Heart right ventricle (tissue), 16 donors: ENCODE measurements at regions of chr1 and their contacts with region 1.

Region 1: DNA sequence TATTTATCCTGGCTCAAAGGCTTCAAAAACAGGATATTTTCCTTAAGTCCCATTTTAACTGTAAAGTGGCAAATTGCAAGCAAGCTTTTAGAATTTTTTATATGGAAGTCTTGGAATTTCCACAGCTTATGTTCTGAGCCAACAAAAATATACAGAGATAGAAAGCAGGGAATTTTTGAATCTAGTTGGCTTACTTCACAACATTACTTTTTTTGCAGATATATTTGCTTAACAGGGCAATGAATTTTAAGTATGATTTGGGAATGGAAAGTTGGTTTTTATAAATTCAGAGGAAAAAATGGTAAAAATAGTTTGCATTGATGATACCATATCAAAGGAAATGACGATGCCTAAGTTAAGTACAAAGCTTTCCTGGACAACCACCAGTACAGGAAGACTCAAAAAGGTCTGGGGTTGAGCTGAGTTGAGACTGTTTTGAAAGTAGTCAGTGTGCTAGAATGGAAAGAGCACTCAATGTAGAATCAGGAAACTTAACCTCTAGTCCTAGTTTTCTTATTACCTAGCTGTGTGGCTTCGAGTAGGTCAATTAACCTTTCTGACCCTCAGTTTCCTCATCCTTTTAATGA is 11.0 kb upstream of the VCAM1 start:
- DNase-seq: no peak
- ATAC-seq: peak in 5 of 8 donors; percentile 77 to 90 (median 86)
- H3K4me3 ChIP-seq: no peak overlapping the region
- H3K27ac ChIP-seq: peak overlapping the region in 4 of 10 donors; percentile 16 to 32 (median 18)
- H3K4me1 ChIP-seq: peaks cover 0 to 23% (median 8%) of the 10 kb centered on the region in 9 donors
- H3K27me3 ChIP-seq: no peaks in the 10 kb centered on the region
- CTCF ChIP-seq: no peak

Region 2: DNA sequence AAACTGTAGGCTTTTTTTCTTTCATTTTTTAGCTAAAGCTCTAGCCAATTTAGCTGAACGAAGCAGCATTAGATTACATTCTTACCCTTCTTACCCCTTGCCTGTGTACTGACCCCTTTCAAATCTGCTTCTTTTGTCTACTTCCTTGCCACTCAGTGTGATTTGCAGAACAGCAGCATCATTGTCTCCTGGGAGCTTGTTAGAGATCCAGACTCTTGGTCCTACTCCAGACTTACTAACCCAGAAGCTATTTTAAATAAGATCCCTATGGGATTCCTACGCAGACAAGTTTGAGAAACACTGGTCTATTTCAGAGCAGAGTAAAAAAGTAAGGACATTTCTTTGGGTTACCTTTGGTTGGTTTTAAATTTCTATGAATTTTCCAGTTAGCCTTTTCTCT is 544.4 kb before region 1 on chr1:
- intact Hi-C with region 1: no loop called
- DNase-seq: no peak
- ATAC-seq: peak; percentile 46 to 76 (median 53)
- H3K4me3 ChIP-seq: no peak overlapping the region
- H3K27ac ChIP-seq: peak overlapping the region in 2 of 10 donors; percentile 3 to 22
- H3K4me1 ChIP-seq: peaks cover 0 to 16% (median 2%) of the 10 kb centered on the region in 9 donors
- H3K27me3 ChIP-seq: no peaks in the 10 kb centered on the region
- CTCF ChIP-seq: no peak

Region 3: DNA sequence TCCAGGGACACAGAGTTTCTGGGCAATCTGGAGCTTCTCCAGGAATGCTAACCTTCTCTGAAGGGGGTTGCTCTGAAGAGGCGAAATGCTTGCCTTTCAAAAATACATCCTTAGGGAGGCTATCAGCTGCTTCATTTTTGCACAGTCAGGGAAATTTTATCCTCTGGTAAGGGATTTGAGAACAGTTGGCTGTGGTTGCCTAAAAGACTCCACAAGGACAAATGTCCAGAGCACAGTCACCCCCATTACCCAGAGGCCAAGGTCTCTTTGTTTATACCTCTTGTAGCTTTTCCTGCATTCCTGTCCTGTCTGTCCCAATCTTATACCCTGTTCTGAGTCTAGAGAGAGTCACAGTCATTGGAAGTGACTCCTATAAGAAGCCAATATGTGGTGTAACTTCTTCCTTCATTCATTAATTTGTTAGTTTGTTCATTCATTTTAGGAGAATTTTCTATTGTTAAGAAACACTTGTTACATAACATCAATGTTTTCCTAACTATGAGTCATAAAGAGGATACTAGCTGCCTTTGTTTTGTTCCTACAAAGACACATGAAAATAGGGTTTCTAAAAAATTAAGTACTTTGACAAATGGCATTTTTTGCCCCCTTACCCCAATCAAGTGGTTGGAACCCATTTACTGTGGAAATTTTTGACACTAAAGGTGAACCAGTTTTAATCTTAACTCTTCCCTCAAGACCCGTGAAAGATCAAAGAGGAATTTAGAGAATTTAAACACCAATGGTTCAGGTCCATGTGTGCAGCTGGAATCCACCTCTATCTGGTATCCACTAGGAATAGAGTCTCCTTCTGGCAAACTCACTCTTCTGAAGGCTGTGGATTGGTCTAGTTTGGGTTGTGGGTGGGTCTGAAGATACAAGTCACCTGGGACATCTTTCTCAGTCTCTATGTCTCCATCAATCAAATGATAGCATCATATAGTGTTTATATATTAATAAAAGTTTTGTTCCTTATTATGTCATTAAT is 123.5 kb before region 1 on chr1:
- intact Hi-C with region 1: no loop called
- DNase-seq: no peak
- ATAC-seq: peak in 1 of 8 donors; percentile 11
- H3K4me3 ChIP-seq: no peak overlapping the region
- H3K27ac ChIP-seq: peak overlapping the region in 1 of 10 donors; percentile 36
- H3K4me1 ChIP-seq: peaks cover 0 to 30% (median 19%) of the 10 kb centered on the region in 9 donors
- H3K27me3 ChIP-seq: no peaks in the 10 kb centered on the region
- CTCF ChIP-seq: no peak

Region 4: GRCh38 chr1:100622037-100622436 is 86.5 kb before region 1 on chr1:
- intact Hi-C with region 1: loop called in 1 of 10 experiments (anchors 10 kb)
- DNase-seq: no peak
- ATAC-seq: peak in 6 of 8 donors; percentile 21 to 94 (median 54)
- H3K4me3 ChIP-seq: no peak overlapping the region
- H3K27ac ChIP-seq: no peak overlapping the region
- H3K4me1 ChIP-seq: peaks cover 0 to 27% (median 0%) of the 10 kb centered on the region in 9 donors
- H3K27me3 ChIP-seq: no peaks in the 10 kb centered on the region
- CTCF ChIP-seq: no peak

Region 5: DNA sequence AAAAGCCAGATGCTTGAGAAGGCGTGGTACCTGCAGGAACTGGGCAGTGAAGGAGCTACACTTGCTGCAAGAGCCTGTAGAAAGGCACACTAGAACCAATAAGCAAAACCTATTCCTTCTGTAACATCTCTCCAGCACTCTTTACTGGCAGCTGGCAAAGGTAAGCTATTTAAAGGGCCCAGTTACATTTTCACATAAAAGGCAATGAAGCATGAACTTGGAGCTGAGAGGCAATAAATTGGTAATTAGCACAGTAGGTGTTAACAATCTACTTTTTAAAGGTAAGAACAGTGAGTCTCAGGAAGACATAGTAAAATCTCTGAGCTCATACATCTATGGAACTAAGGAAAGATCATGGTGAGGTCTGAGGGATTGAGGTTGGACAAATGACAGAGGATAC is 1455.2 kb after region 1 on chr1:
- intact Hi-C with region 1: no loop called
- DNase-seq: no peak
- ATAC-seq: no peak
- H3K4me3 ChIP-seq: no peak overlapping the region
- H3K27ac ChIP-seq: no peak overlapping the region
- H3K4me1 ChIP-seq: no peaks in the 10 kb centered on the region
- H3K27me3 ChIP-seq: no peaks in the 10 kb centered on the region
- CTCF ChIP-seq: no peak